ENCODE measurements at regions of chr12 and their contacts with region 1.

Region 1: DNA sequence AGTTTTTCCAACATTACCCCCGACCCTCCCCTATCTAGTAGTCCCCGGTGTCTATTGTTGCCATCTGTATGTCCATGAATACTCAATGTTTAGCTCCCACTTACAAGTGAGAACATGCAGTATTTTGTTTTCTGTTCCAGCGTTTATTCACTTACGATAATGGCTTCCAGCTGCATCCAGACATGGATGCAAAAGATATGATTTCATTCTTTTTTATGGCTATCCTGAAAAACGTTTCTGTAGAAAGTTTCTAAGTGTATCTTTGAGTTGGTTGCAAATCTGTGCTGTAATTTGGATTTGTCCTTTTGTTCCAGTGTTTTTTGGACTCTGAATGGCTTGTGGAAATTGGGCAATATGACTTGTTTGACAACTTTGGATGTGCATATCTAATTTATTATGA is 11.8 kb downstream of the SP1 start:
- H3K4me3 ChIP-seq: no peak overlapping the region
- H3K27ac ChIP-seq: peak overlapping the region; percentile 51; the same call in 1 of the 2 replicates
- H3K4me1 ChIP-seq: peaks cover 18% of the 10 kb centered on the region
- CTCF ChIP-seq: no peak

Region 2: GRCh38 chr12:52256165-52256876 is 1135.4 kb before region 1 on chr12:
- CTCF ChIA-PET with region 1: interaction called, 11 read pairs
- POLR2A ChIA-PET with region 1: no interaction called
- H3K4me3 ChIP-seq: no peak overlapping the region
- H3K27ac ChIP-seq: no peak overlapping the region
- H3K4me1 ChIP-seq: peaks cover 10% of the 10 kb centered on the region
- CTCF ChIP-seq: no peak

Region 3: GRCh38 chr12:52629281-52630007 is 762.3 kb before region 1 on chr12:
- CTCF ChIA-PET with region 1: no interaction called
- POLR2A ChIA-PET with region 1: no interaction called
- H3K4me3 ChIP-seq: no peak overlapping the region
- H3K27ac ChIP-seq: no peak overlapping the region
- H3K4me1 ChIP-seq: no peaks in the 10 kb centered on the region; the same call in 1 of the 2 replicates
- CTCF ChIP-seq: no peak

Region 4: GRCh38 chr12:53313996-53314395 is 77.7 kb before region 1 on chr12:
- CTCF ChIA-PET with region 1: no interaction called
- POLR2A ChIA-PET with region 1: no interaction called
- H3K4me3 ChIP-seq: no peak overlapping the region
- H3K27ac ChIP-seq: no peak overlapping the region
- H3K4me1 ChIP-seq: no peaks in the 10 kb centered on the region
- CTCF ChIP-seq: no peak

Measured in HEK293 (cell line).